IMR-90 (cell line): ENCODE measurements at regions of chr2 and their contacts with region 1.

Region 1: DNA sequence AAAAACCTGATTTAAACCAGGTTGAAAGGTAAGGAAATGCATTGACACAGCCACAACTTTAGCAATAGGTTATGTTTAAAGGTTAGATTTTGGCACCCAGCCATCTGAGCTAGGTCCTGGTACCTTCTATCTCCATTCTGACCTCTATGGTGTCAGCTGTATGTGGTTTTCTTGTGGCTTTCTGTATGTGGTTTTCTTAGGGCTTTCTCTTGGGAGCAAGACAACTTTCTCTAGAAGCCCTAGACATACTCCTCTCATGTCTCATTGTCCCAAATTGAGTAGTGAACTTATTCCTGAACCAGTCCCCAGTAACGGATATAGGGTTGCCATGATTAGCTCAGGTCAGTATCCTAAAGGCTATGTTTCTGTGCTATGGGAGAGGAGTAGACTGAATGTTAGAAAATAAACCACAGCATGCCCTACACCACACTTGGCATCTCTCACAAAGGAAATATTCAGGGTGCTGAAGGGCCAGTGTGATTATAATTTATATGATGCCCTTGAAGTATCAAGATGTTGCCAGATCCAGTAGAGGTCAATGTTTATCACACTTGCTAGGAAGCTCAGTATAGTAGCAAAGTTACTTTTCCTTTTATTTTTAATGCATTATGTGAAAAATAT is 176.1 kb downstream of the CAPN13 start:
- DNase-seq: peak; percentile 13
- ATAC-seq: no peak
- H3K4me3 ChIP-seq: no peak overlapping the region
- H3K27ac ChIP-seq: no peak overlapping the region
- H3K4me1 ChIP-seq: peaks cover 2% of the 10 kb centered on the region; the same call in 1 of the 2 replicates
- H3K27me3 ChIP-seq: no peaks in the 10 kb centered on the region
- CTCF ChIP-seq: no peak
- POLR2A ChIP-seq: no peak
- RAD21 ChIP-seq: no peak

Region 2: GRCh38 chr2:30584116-30584515 is 47.0 kb before region 1 on chr2:
- CTCF ChIA-PET with region 1: no interaction called
- POLR2A ChIA-PET with region 1: no interaction called
- dilution Hi-C with region 1: no loop called
- in situ Hi-C with region 1: no loop called
- intact Hi-C with region 1: loop called (anchors 5 kb)
- DNase-seq: no peak
- ATAC-seq: no peak
- H3K4me3 ChIP-seq: no peak overlapping the region
- H3K27ac ChIP-seq: no peak overlapping the region
- H3K4me1 ChIP-seq: peaks cover 4% of the 10 kb centered on the region; the same call in 1 of the 2 replicates
- H3K27me3 ChIP-seq: no peaks in the 10 kb centered on the region
- CTCF ChIP-seq: no peak
- POLR2A ChIP-seq: no peak
- RAD21 ChIP-seq: no peak